CD4-positive, alpha-beta T cell (primary cell): ENCODE measurements at regions of chr6 and their contacts with region 1.

Region 1: GRCh38 chr6:26553635-26554446 is 15.7 kb downstream of the HMGN4 start:
- DNase-seq: peak; percentile 51 to 91 (median 64)
- ATAC-seq: peak; percentile 30
- H3K4me3 ChIP-seq: peak overlapping the region; percentile 60
- H3K4me3 Mint-ChIP-seq: no peak overlapping the region
- H3K27ac ChIP-seq: no peak overlapping the region
- H3K27ac Mint-ChIP-seq: no peak overlapping the region
- H3K4me1 ChIP-seq: peaks cover 33% of the 10 kb centered on the region
- H3K4me1 Mint-ChIP-seq: peaks cover 25% of the 10 kb centered on the region
- H3K27me3 ChIP-seq: no peaks in the 10 kb centered on the region
- H3K27me3 Mint-ChIP-seq: peaks cover 8% of the 10 kb centered on the region
- CTCF ChIP-seq: no peak

Region 2: GRCh38 chr6:26329763-26330511 is 223.9 kb before region 1 on chr6:
- CTCF ChIA-PET with region 1: no interaction called
- POLR2A ChIA-PET with region 1: interaction called, 9 read pairs
- intact Hi-C with region 1: loop called in 1 of 2 experiments (anchors 5 kb)
- DNase-seq: peak in 13 of 14 experiments; percentile 23 to 84 (median 47)
- ATAC-seq: peak; percentile 21
- H3K4me3 ChIP-seq: no peak overlapping the region
- H3K4me3 Mint-ChIP-seq: peak overlapping the region; percentile 88
- H3K27ac ChIP-seq: no peak overlapping the region
- H3K27ac Mint-ChIP-seq: peak overlapping the region; percentile 92
- H3K4me1 ChIP-seq: peaks cover 27% of the 10 kb centered on the region
- H3K4me1 Mint-ChIP-seq: peaks cover 61% of the 10 kb centered on the region
- H3K27me3 ChIP-seq: peaks cover 23% of the 10 kb centered on the region in 2 experiments
- H3K27me3 Mint-ChIP-seq: peaks cover 41% of the 10 kb centered on the region
- CTCF ChIP-seq: no peak

Region 3: GRCh38 chr6:26493258-26493657 is 60.6 kb before region 1 on chr6:
- CTCF ChIA-PET with region 1: no interaction called
- POLR2A ChIA-PET with region 1: no interaction called
- intact Hi-C with region 1: no loop called
- DNase-seq: peak in 3 of 14 experiments; percentile 27 to 38 (median 37)
- ATAC-seq: peak; percentile 59
- H3K4me3 ChIP-seq: no peak overlapping the region
- H3K4me3 Mint-ChIP-seq: no peak overlapping the region
- H3K27ac ChIP-seq: no peak overlapping the region
- H3K27ac Mint-ChIP-seq: no peak overlapping the region
- H3K4me1 ChIP-seq: no peaks in the 10 kb centered on the region
- H3K4me1 Mint-ChIP-seq: no peaks in the 10 kb centered on the region
- H3K27me3 ChIP-seq: no peaks in the 10 kb centered on the region
- H3K27me3 Mint-ChIP-seq: no peaks in the 10 kb centered on the region
- CTCF ChIP-seq: no peak

Region 4: DNA sequence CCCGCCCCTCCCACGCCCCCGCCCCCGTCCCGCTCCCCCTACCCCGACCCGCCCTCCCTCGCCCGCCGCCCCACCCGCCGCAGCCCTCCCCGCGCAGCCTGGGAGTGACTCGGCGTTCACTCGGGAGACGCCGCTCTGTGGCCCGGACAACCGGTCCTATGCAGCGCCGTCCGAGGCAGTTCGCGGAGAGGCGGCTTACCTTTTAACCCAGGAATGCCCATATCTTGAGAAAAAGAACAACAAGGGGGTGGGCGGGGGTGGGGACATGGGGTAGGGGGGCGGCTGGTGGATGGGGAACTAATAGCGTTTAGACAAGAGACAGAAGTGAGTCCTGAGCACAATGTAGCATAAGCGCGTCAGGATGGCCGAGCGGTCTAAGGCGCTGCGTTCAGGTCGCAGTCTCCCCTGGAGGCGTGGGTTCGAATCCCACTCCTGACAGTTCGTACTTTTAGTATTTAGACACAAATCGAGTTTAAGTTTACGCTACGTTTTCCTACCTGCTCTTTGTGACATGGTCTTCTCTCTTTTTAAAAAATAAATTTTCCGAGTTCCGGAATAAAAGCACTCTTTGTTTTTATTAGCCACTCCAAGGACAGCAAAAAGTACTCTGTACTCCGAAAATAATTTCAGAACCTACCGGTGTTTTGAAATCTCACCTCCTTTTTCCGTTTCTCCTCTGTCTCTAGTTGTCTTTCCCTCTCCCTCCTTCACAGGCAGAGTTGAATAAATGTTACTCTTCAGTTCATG is 32.8 kb before region 1 on chr6:
- CTCF ChIA-PET with region 1: interaction called, 3 read pairs
- POLR2A ChIA-PET with region 1: interaction called, 3 read pairs
- intact Hi-C with region 1: loop called (anchors 1 to 2 kb)
- DNase-seq: peak; percentile 77 to 93 (median 84)
- ATAC-seq: peak; percentile 81
- H3K4me3 ChIP-seq: peak overlapping the region; percentile 65
- H3K4me3 Mint-ChIP-seq: peak overlapping the region; percentile 89
- H3K27ac ChIP-seq: peak overlapping the region; percentile 50 to 61
- H3K27ac Mint-ChIP-seq: peak overlapping the region; percentile 99
- H3K4me1 ChIP-seq: peaks cover 10% of the 10 kb centered on the region
- H3K4me1 Mint-ChIP-seq: peaks cover 30% of the 10 kb centered on the region
- H3K27me3 ChIP-seq: no peaks in the 10 kb centered on the region
- H3K27me3 Mint-ChIP-seq: peaks cover 9% of the 10 kb centered on the region
- CTCF ChIP-seq: no peak

Region 5: DNA sequence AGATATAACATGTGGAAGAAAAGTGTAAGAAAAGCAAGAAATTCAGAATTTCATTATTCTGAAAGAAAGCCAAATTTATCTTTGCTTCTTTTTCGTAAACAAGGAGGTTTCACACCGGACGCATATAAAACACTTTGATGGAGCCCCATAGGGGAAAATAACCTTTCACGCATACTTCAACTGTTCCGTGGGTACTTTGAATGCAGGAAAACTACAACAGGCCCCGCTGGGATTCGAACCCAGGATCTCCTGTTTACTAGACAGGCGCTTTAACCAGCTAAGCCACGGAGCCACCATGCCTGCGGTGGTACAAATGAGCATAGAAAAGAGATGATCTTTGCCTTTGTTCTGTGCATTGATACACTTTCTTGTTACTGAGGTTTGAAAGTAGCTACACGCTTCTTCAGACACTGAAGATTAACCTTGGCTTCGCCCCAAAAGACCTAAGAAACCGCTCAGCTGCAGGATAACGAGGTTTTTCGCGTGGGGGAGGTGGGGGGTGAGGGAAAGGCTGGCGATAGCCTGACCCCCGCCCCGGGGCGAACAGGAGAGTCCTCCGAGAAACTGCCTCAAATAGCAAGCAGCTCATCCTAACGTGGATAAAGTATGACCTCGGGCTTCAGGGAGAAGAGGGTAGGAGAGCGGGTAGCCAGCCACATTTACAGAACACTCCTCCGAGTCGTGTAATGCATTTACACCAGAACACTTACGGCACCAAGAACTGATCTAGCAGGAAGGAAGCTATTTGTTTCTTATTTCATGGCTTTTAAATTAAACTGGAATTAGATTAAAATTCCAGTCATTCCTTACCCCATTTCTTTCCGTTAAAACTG is 20.9 kb before region 1 on chr6:
- CTCF ChIA-PET with region 1: interaction called, 3 read pairs
- POLR2A ChIA-PET with region 1: interaction called, 113 read pairs
- intact Hi-C with region 1: loop called (anchors 1 to 2 kb)
- DNase-seq: peak; percentile 79 to 96 (median 90)
- ATAC-seq: peak; percentile 36
- H3K4me3 ChIP-seq: peak overlapping the region; percentile 72
- H3K4me3 Mint-ChIP-seq: peak overlapping the region; percentile 98
- H3K27ac ChIP-seq: peak overlapping the region; percentile 20 to 59
- H3K27ac Mint-ChIP-seq: peak overlapping the region; percentile 97
- H3K4me1 ChIP-seq: peaks cover 28% of the 10 kb centered on the region
- H3K4me1 Mint-ChIP-seq: peaks cover 50% of the 10 kb centered on the region
- H3K27me3 ChIP-seq: no peaks in the 10 kb centered on the region
- H3K27me3 Mint-ChIP-seq: peaks cover 16% of the 10 kb centered on the region
- CTCF ChIP-seq: no peak

Region 6: DNA sequence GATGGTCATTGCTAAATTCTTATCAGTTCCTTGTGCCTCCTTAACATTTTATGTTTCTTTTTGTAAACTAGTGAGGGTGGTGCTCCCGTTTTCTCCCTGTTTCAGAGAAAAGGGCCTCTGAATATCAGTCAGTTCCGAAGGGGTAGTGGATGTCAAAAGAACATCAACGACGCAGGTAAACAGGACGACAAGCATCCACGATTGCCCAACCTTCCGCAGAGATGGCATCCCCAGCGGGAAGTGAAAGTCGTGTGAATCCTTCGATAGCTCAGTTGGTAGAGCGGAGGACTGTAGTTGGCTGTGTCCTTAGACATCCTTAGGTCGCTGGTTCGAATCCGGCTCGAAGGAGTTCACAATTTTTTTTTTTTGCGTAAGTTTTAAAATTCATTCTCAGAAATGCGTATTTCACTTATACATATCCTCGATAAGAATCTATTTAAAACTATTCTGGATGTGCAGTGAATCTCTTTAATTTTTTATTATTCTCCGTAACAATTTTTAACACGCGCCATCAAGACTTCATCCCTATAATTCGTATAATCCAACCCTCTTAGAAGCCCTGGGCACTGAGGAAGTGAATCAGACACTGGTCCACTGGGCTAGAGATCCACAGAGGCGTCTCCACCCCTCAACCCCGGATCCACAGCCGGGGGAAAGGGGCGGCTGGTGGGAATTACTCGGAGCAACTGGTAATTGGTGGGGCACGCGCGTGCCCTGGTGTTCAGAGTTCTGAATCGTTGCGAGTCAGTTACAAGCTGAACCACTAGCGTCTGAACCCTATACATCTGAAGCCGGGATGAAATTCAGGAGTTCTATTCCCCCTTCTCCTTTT is 15.0 kb after region 1 on chr6:
- CTCF ChIA-PET with region 1: interaction called, 5 read pairs
- POLR2A ChIA-PET with region 1: interaction called, 65 read pairs
- intact Hi-C with region 1: loop called (anchors 1 kb)
- DNase-seq: peak; percentile 96 to 100 (median 98)
- ATAC-seq: peak; percentile 74
- H3K4me3 ChIP-seq: peak overlapping the region; percentile 55
- H3K4me3 Mint-ChIP-seq: peak overlapping the region; percentile 97
- H3K27ac ChIP-seq: peak overlapping the region; percentile 37 to 53
- H3K27ac Mint-ChIP-seq: peak overlapping the region; percentile 100
- H3K4me1 ChIP-seq: peaks cover 21% of the 10 kb centered on the region
- H3K4me1 Mint-ChIP-seq: peaks cover 29% of the 10 kb centered on the region
- H3K27me3 ChIP-seq: no peaks in the 10 kb centered on the region
- H3K27me3 Mint-ChIP-seq: peaks cover 16% of the 10 kb centered on the region
- CTCF ChIP-seq: peak; percentile 58

Region 7: GRCh38 chr6:26629359-26629758 is 75.5 kb after region 1 on chr6:
- CTCF ChIA-PET with region 1: no interaction called
- POLR2A ChIA-PET with region 1: no interaction called
- intact Hi-C with region 1: no loop called
- DNase-seq: no peak
- ATAC-seq: no peak
- H3K4me3 ChIP-seq: no peak overlapping the region
- H3K4me3 Mint-ChIP-seq: no peak overlapping the region
- H3K27ac ChIP-seq: no peak overlapping the region
- H3K27ac Mint-ChIP-seq: no peak overlapping the region
- H3K4me1 ChIP-seq: no peaks in the 10 kb centered on the region
- H3K4me1 Mint-ChIP-seq: no peaks in the 10 kb centered on the region
- H3K27me3 ChIP-seq: peaks cover 0 to 3% of the 10 kb centered on the region in 2 experiments
- H3K27me3 Mint-ChIP-seq: no peaks in the 10 kb centered on the region
- CTCF ChIP-seq: no peak